MCF 10A (cell line): ENCODE measurements at regions of chr9 and their contacts with region 1.

Region 1: GRCh38 chr9:71911253-71912074 is at the start of gene C9orf85:
- DNase-seq: peak; percentile 100
- H3K4me3 Mint-ChIP-seq: peak within 1 kb of the TSS; percentile 95
- H3K27ac Mint-ChIP-seq: peak within 1 kb of the TSS; percentile 88
- H3K4me1 Mint-ChIP-seq: peaks cover 23% of the 10 kb centered on the region
- H3K27me3 Mint-ChIP-seq: no peaks in the 10 kb centered on the region
- CTCF ChIP-seq: no peak
- total RNA-seq, gene C9orf85: 19.6 and 23.3 TPM in 2 replicates

Region 2: GRCh38 chr9:71847892-71848291 is 63.6 kb before region 1 on chr9:
- CTCF ChIA-PET with region 1: no interaction called
- POLR2A ChIA-PET with region 1: no interaction called
- intact Hi-C with region 1: loop called (anchors 10 kb)
- DNase-seq: no peak
- H3K4me3 Mint-ChIP-seq: no peak overlapping the region
- H3K27ac Mint-ChIP-seq: no peak overlapping the region
- H3K4me1 Mint-ChIP-seq: no peaks in the 10 kb centered on the region
- H3K27me3 Mint-ChIP-seq: no peaks in the 10 kb centered on the region
- CTCF ChIP-seq: no peak

Region 3: DNA sequence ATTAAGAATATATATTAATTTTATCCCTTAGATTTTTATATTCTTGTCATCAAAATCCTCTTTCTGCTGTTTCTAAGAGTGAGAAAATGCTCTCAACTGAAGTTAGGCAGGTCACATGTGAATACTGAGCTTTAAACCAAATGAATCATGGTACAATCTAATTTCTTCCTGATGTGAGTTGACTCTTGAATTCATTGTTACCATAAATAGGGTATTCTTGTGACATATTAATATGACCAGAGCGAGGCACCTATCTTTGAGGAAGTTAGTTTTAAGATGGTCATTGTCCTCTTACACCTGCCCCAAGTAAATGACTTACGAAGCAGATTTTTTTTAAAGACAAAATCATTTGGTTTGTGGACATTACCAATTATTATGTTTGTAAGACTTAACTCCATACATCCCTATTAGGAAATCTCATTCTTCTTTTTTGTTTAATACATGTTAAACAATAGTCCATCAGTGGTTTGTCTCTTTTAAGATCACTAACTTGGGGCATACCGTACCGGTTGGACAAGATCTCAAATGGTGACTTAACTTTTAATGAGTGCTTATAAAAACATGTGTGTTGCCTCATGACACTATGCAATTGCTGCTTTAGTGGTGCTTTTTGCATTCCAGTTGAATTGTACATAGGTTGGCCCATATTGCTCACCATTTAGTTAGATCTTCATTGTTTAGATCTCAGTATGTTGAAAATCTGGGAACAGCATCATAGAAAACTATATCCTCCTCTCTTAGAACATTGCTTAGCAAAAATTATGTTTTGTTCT is 17.6 kb after region 1 on chr9:
- CTCF ChIA-PET with region 1: interaction called, 4 read pairs
- POLR2A ChIA-PET with region 1: interaction called, 78 read pairs
- intact Hi-C with region 1: no loop called
- DNase-seq: peak; percentile 26
- H3K4me3 Mint-ChIP-seq: no peak overlapping the region
- H3K27ac Mint-ChIP-seq: peak overlapping the region; percentile 35
- H3K4me1 Mint-ChIP-seq: peaks cover 16% of the 10 kb centered on the region
- H3K27me3 Mint-ChIP-seq: no peaks in the 10 kb centered on the region
- CTCF ChIP-seq: no peak

Region 4: DNA sequence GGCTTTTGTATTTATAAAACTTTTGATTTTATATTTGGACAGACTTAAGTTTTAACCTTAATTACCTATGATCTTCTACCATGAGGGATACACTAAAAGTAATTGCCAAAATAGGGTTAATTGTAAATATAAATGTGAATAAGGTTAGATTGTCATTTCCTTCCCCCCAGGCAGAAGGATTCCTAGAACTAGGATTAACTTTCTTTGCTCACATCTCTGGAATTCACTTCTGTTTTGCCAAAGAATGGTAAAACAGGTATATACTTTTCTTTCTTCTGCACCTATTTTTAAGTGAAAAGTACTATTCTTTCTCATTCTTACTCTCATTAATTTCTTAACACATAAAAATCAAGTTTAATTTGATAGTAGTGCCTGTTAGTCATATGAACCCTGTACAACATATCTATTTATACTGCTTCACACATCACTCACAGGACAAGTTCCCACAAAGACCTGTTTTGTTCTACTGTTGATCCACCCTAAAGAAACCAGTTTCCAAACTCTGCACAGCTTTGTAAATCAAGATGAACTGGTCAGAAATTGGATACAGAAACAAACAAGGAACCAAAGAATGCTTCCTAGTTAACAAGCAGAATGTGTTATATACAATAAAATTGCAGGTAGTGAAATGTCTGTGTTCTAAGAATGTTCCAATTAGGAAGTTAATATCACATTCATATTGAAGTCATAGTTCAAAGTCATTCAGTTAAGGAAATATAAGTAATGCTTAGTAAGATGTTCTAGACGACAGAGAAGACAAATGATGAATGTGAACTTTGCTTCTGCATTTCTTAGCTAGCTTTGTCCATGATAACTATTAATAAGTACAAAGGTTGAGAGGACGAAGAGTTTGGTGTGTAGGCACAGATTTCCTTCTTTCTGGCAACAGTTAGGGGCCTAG is 33.3 kb after region 1 on chr9:
- CTCF ChIA-PET with region 1: interaction called, 3 read pairs
- POLR2A ChIA-PET with region 1: interaction called, 79 read pairs
- intact Hi-C with region 1: no loop called
- DNase-seq: peak; percentile 48
- H3K4me3 Mint-ChIP-seq: no peak overlapping the region
- H3K27ac Mint-ChIP-seq: peak overlapping the region; percentile 92
- H3K4me1 Mint-ChIP-seq: peaks cover 28% of the 10 kb centered on the region
- H3K27me3 Mint-ChIP-seq: no peaks in the 10 kb centered on the region
- CTCF ChIP-seq: no peak

Region 5: DNA sequence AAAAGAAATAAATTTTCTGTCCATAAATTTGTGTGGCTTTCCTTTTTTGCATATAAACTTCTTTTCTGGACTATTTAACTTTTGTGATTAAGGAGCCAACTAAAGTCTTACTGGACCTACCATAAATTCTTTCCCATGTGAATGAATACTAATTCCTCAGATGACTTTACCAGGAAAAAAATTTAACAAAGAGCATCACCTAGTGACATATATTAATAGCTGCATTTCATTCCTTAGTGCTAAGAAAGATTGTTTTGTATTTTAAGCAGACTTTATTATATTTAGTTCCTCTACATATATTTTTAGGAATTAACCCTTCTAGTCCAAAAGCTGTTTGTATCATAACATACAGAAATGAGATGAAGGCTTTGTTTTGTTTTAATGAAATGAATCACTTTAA is 64.4 kb after region 1 on chr9:
- CTCF ChIA-PET with region 1: interaction called, 10 read pairs
- POLR2A ChIA-PET with region 1: no interaction called
- intact Hi-C with region 1: no loop called
- DNase-seq: peak; percentile 2
- H3K4me3 Mint-ChIP-seq: no peak overlapping the region
- H3K27ac Mint-ChIP-seq: no peak overlapping the region
- H3K4me1 Mint-ChIP-seq: no peaks in the 10 kb centered on the region
- H3K27me3 Mint-ChIP-seq: no peaks in the 10 kb centered on the region
- CTCF ChIP-seq: no peak